Lower lobe of right lung (tissue), 2 donors: ENCODE measurements at regions of chr7 and their contacts with region 1.

Region 1: DNA sequence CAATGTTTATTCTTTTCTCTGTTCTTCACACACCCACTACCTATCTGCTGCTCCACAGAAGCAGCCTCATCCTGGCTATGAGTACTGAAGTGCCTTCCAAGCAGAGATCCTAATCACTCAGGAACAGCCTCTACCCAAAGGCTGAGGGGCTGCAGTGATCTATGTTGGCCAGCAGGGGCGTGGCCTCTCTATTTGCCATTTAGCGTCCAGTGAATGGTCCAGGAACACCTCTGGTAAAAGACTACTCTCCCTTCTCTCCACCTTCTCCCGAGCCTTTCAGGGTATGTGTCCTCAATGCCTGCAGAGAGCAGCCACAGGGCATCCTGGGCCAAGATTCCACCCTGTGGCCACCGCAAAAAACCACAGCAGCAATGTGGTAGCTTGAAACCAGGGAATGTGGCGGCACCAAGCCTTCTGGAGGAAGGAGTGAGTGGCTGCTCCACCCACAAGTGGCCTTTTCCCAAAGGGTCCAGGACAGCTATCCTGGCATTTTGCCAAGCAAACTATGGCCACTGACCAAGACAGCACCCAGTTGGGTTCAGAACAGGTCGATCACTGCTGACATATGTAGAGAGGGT is 70.9 kb downstream of the SYPL1 start:
- DNase-seq: no peak
- ATAC-seq: peak; percentile 59 to 61
- H3K4me3 ChIP-seq: no peak overlapping the region
- H3K27ac ChIP-seq: no peak overlapping the region
- H3K4me1 ChIP-seq: peaks cover 14% of the 10 kb centered on the region
- H3K27me3 ChIP-seq: no peaks in the 10 kb centered on the region
- CTCF ChIP-seq: peak; percentile 74

Region 2: GRCh38 chr7:105652359-105652993 is 388.8 kb before region 1 on chr7:
- intact Hi-C with region 1: loop called (anchors 5 kb)
- DNase-seq: peak; percentile 79
- ATAC-seq: peak; percentile 89
- H3K4me3 ChIP-seq: no peak overlapping the region
- H3K27ac ChIP-seq: no peak overlapping the region
- H3K4me1 ChIP-seq: peaks cover 23% of the 10 kb centered on the region
- H3K27me3 ChIP-seq: no peaks in the 10 kb centered on the region
- CTCF ChIP-seq: peak; percentile 89